RWPE1 (cell line): ENCODE measurements at regions of chr1 and their contacts with region 1.

Region 1: DNA sequence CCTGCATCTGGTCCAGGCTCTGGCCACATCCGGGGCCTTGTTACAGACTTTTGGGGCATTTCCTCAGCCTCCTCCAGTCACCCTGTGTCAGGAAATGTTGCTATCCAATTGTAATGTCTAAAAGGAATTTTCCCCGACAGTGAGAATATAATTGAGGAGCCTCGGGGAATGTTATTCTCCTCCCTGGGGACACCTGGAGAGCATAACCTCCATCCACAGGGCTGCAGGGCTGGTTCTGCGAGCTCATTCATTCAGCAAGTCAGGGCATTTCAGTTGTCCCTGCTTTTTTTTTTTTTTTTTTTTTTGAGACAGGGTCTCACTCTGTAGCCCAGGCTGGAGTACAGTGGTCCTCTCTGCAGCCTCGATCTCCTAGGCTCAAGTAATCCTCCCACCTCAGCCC is 72.6 kb downstream of the MDM4 start:
- DNase-seq: peak; percentile 42
- H3K27ac ChIP-seq: no peak overlapping the region
- CTCF ChIP-seq: no peak

Region 2: GRCh38 chr1:203572134-203572625 is 1016.6 kb before region 1 on chr1:
- CTCF ChIA-PET with region 1: no interaction called
- POLR2A ChIA-PET with region 1: interaction called, 12 read pairs
- DNase-seq: no peak
- H3K27ac ChIP-seq: no peak overlapping the region
- CTCF ChIP-seq: no peak

Region 3: GRCh38 chr1:204818998-204819397 is 230.2 kb after region 1 on chr1:
- CTCF ChIA-PET with region 1: no interaction called
- POLR2A ChIA-PET with region 1: no interaction called
- DNase-seq: no peak
- H3K27ac ChIP-seq: no peak overlapping the region
- CTCF ChIP-seq: no peak